ENCODE measurements at regions of chr12 and their contacts with region 1.

Region 1: DNA sequence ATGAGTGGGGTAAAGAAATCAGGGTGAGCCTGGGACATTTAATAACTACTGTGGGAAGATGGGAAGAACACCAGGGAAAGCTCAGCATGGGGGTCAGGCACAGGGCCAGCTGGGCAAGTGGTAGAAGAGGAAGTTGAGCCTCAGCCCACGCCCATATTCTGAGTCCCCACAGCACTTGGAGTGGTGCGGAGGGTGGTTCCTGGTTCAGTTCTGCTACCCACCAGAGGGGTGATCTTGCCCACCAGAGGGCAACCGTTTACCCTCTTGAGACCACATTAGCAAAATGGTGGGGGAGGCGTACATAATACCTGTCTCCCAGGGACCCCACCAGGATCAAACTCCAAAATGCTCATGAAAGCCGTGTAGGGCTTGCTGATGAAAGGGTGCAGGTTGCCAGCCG is 16.8 kb upstream of the ANKRD33 start:
- DNase-seq: no peak
- H3K4me3 ChIP-seq: no peak overlapping the region
- H3K27ac ChIP-seq: no peak overlapping the region
- H3K4me1 ChIP-seq: no peaks in the 10 kb centered on the region
- CTCF ChIP-seq: peak; percentile 26; the same call in 1 of the 2 replicates

Region 2: DNA sequence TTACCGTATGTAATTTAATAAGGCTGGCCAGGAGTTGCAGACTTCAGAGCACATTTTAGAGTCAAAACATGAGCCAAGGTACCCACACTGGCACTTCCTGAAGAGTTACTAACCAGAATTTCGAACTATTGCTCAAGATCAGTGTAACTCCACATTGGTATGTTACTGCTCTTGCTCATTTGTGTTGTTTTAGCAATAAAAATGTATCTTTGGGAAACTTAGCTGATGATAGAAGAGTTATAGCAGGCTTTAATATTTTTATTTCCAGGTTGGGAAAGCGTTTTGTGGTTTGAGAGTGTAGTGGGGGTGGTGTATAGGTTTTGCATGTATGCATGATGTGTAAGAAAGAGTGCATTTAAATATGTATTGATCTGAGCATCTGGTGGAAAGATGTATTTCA is 183.5 kb before region 1 on chr12:
- CTCF ChIA-PET with region 1: no interaction called
- POLR2A ChIA-PET with region 1: no interaction called
- intact Hi-C with region 1: no loop called
- DNase-seq: no peak
- H3K4me3 ChIP-seq: no peak overlapping the region
- H3K27ac ChIP-seq: no peak overlapping the region
- H3K4me1 ChIP-seq: no peaks in the 10 kb centered on the region
- CTCF ChIP-seq: no peak

Region 3: GRCh38 chr12:51815571-51815970 is 55.6 kb before region 1 on chr12:
- CTCF ChIA-PET with region 1: interaction called, 25 read pairs
- POLR2A ChIA-PET with region 1: no interaction called
- intact Hi-C with region 1: no loop called
- DNase-seq: no peak
- H3K4me3 ChIP-seq: no peak overlapping the region
- H3K27ac ChIP-seq: no peak overlapping the region
- H3K4me1 ChIP-seq: no peaks in the 10 kb centered on the region
- CTCF ChIP-seq: no peak